ENCODE measurements at regions of chr5 and their contacts with region 1.

Region 1: GRCh38 chr5:173573126-173573960 is 43.1 kb downstream of the BOD1 start:
- DNase-seq: peak; percentile 13 to 95
- H3K4me3 ChIP-seq: peak overlapping the region in 1 of 4 experiments; percentile 39; a peak in 1 of 8 replicates
- H3K27ac ChIP-seq: no peak overlapping the region
- H3K4me1 ChIP-seq: peaks cover 0 to 7% (median 3%) of the 10 kb centered on the region in 4 experiments; a peak in 6 of 7 replicates
- H3K27me3 ChIP-seq: peaks cover 0 to 2% (median 0%) of the 10 kb centered on the region in 4 experiments; a peak in 2 of 7 replicates
- CTCF ChIP-seq: peak; percentile 88 to 95 (median 94)
- EP300 ChIP-seq: 0 out of 3 replicates have a peak, but pooled peaks of 1 of the 2 experiments have one; percentile 26
- POLR2A ChIP-seq: no peak
- RAD21 ChIP-seq: peak; percentile 85 to 92

Region 2: DNA sequence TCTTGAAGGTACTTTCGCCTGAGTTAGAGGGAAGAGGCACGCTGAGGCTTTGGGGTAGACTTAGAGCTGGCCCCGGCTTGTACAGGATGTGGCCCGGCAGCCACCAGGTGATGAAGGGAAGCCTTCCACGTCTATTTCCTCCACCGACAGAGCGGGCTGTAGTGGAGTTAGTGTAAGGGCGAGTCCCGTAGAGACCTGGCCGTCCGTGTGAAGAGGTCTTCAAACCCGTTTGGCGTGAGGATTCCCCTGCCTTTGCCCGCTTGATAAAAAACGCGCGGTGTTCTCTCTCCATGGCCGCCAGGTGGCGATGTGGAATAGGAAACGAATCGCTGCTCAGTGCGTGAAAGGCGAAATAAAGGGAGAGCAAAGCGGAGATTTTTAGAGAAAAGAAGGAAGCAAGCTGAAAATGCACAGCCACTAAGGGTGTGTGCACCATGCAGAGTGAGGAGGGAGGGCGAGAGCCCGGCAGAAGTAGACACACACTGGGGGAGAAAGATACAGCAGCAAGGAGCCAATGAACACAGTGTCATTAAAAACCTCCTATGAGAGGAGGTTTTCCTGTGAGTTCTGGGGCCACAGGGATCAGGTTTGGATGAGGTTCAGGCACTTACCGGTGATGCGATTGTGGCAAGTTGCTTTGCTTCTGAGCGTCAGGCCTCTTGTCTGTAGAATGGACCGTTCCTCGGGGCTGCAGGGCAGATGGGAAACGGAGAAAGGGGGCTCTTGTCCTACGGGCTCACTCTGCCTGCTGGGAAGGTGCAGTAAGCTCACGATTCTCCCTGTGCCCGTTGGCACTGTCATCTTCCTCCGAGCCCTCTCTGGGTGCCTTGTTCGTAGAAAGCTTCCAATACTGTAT is 279.3 kb before region 1 on chr5:
- CTCF ChIA-PET with region 1: interaction called, 23 read pairs
- POLR2A ChIA-PET with region 1: no interaction called
- DNase-seq: peak in 1 of 2 experiments; percentile 91
- H3K4me3 ChIP-seq: peak overlapping the region in 2 of 4 experiments; percentile 11 to 12; a peak in 3 of 8 replicates
- H3K27ac ChIP-seq: no peak overlapping the region
- H3K4me1 ChIP-seq: peaks cover 15 to 28% (median 15%) of the 10 kb centered on the region in 4 experiments
- H3K27me3 ChIP-seq: peaks cover 0 to 4% (median 2%) of the 10 kb centered on the region in 4 experiments; a peak in 6 of 7 replicates
- CTCF ChIP-seq: peak; percentile 77 to 89 (median 89)
- EP300 ChIP-seq: no peak
- POLR2A ChIP-seq: no peak
- RAD21 ChIP-seq: peak; percentile 95

Region 3: GRCh38 chr5:173396311-173396993 is 176.9 kb before region 1 on chr5:
- CTCF ChIA-PET with region 1: interaction called, 33 read pairs
- POLR2A ChIA-PET with region 1: no interaction called
- DNase-seq: peak; percentile 21 to 76
- H3K4me3 ChIP-seq: no peak overlapping the region
- H3K27ac ChIP-seq: no peak overlapping the region
- H3K4me1 ChIP-seq: no peaks in the 10 kb centered on the region
- H3K27me3 ChIP-seq: peaks cover 0 to 1% (median 0%) of the 10 kb centered on the region in 4 experiments; a peak in 1 of 7 replicates
- CTCF ChIP-seq: peak; percentile 67 to 73 (median 71)
- EP300 ChIP-seq: no peak
- POLR2A ChIP-seq: no peak
- RAD21 ChIP-seq: peak; percentile 61 to 73

Region 4: GRCh38 chr5:173451031-173451430 is 122.3 kb before region 1 on chr5:
- CTCF ChIA-PET with region 1: interaction called, 24 read pairs
- POLR2A ChIA-PET with region 1: interaction called, 3 read pairs
- DNase-seq: peak; percentile 3 to 61
- H3K4me3 ChIP-seq: no peak overlapping the region
- H3K27ac ChIP-seq: no peak overlapping the region
- H3K4me1 ChIP-seq: no peaks in the 10 kb centered on the region
- H3K27me3 ChIP-seq: no peaks in the 10 kb centered on the region
- CTCF ChIP-seq: peak; percentile 53 to 82 (median 65); a peak in 3 of 4 replicates
- EP300 ChIP-seq: no peak
- POLR2A ChIP-seq: no peak
- RAD21 ChIP-seq: peak; percentile 52 to 64

Region 5: GRCh38 chr5:173518856-173519255 is 54.5 kb before region 1 on chr5:
- CTCF ChIA-PET with region 1: no interaction called
- POLR2A ChIA-PET with region 1: no interaction called
- DNase-seq: no peak
- H3K4me3 ChIP-seq: no peak overlapping the region
- H3K27ac ChIP-seq: no peak overlapping the region
- H3K4me1 ChIP-seq: peaks cover 0 to 9% (median 0%) of the 10 kb centered on the region in 4 experiments; a peak in 1 of 7 replicates
- H3K27me3 ChIP-seq: no peaks in the 10 kb centered on the region
- CTCF ChIP-seq: no peak
- EP300 ChIP-seq: no peak
- POLR2A ChIP-seq: no peak
- RAD21 ChIP-seq: no peak

Region 6: GRCh38 chr5:173554038-173554954 is 19.0 kb before region 1 on chr5:
- CTCF ChIA-PET with region 1: interaction called, 15 read pairs
- POLR2A ChIA-PET with region 1: no interaction called
- DNase-seq: no peak
- H3K4me3 ChIP-seq: no peak overlapping the region
- H3K27ac ChIP-seq: no peak overlapping the region
- H3K4me1 ChIP-seq: peaks cover 0 to 8% (median 4%) of the 10 kb centered on the region in 4 experiments; a peak in 5 of 7 replicates
- H3K27me3 ChIP-seq: no peaks in the 10 kb centered on the region; a peak in 1 of 7 replicates
- CTCF ChIP-seq: peak in 1 of 3 experiments; percentile 13; a peak in 1 of 4 replicates
- EP300 ChIP-seq: no peak
- POLR2A ChIP-seq: no peak
- RAD21 ChIP-seq: peak in 1 of 2 experiments; percentile 25; a peak in 1 of 4 replicates